Activated T-helper 1 cell treated with anti-CD3 and anti-CD28 coated beads, Interleukin-12 subunit alpha, Interleukin-12 subunit beta, Interleukin-2, Interleukin-4 antibody, amounts not matched to agents 30 ng/mL and 10 ng/mL and 1 ng/mL, durations not matched to agents 14 hours and 24 hours and 36 hours (primary cell): ENCODE measurements at regions of chr17 and their contacts with region 1.

Region 1: GRCh38 chr17:37373530-37374159 is 2.1 kb upstream of the C17orf78 start:
- DNase-seq: peak; percentile 62
- H3K4me3 Mint-ChIP-seq: no peak overlapping the region
- H3K27ac Mint-ChIP-seq: no peak overlapping the region
- H3K4me1 Mint-ChIP-seq: peaks cover 8% of the 10 kb centered on the region
- H3K27me3 Mint-ChIP-seq: no peaks in the 10 kb centered on the region

Region 2: DNA sequence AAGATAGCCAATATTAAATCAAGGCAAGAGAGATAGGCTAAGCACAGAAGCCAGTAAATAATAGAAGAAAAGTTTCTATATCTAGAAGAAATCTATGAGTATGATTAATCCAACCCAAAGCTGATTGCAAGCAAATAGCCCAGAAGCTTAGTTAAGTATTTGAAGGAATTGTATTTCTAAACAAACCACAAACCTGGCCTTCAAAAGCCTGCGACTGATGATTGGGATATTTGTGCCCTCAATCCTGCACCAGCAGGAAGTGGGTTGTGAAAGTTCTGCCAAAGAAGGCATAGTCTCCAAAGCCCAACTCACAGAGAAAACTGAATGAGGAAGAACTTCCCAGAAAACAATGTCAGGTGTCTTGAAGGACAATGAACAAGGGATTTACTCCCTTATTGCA is 112.4 kb before region 1 on chr17:
- intact Hi-C with region 1: loop called (anchors 10 kb)
- DNase-seq: no peak
- H3K4me3 Mint-ChIP-seq: no peak overlapping the region
- H3K27ac Mint-ChIP-seq: no peak overlapping the region
- H3K4me1 Mint-ChIP-seq: no peaks in the 10 kb centered on the region
- H3K27me3 Mint-ChIP-seq: no peaks in the 10 kb centered on the region

Region 3: GRCh38 chr17:37358830-37359681 is 14.6 kb before region 1 on chr17:
- intact Hi-C with region 1: loop called (anchors 1 kb)
- DNase-seq: peak; percentile 90
- H3K4me3 Mint-ChIP-seq: peak overlapping the region; percentile 98
- H3K27ac Mint-ChIP-seq: peak overlapping the region; percentile 92
- H3K4me1 Mint-ChIP-seq: peaks cover 32% of the 10 kb centered on the region
- H3K27me3 Mint-ChIP-seq: no peaks in the 10 kb centered on the region

Region 4: GRCh38 chr17:37392024-37392590 is 18.5 kb after region 1 on chr17:
- intact Hi-C with region 1: loop called (anchors 1 kb)
- DNase-seq: no peak
- H3K4me3 Mint-ChIP-seq: no peak overlapping the region
- H3K27ac Mint-ChIP-seq: no peak overlapping the region
- H3K4me1 Mint-ChIP-seq: peaks cover 22% of the 10 kb centered on the region
- H3K27me3 Mint-ChIP-seq: no peaks in the 10 kb centered on the region

Region 5: DNA sequence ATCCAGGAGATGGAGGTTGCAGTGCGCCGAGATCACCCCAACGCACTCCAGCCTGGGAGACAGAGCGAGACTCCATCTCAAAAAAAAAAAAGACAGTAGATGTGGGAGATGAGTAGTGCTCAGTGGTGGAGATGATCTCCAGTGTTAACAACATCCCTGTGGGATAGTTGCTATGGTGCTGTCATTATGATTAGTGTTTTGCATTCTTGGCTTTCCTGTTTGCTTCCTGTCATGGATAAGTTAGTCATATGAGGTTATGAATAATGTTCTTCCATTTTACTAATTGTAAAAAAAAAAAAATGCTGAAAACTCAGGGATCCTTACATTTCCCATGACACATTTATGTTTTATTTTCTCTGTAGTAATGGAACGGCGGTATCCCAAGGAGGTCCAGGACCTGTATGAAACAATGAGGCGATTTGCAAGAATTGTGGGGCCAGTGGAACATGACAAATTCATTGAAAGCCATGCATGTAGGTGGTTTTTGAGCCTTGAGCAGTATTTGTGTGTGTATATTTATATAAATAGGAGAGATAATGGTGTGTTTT is 91.5 kb after region 1 on chr17:
- intact Hi-C with region 1: no loop called
- DNase-seq: no peak
- H3K4me3 Mint-ChIP-seq: no peak overlapping the region
- H3K27ac Mint-ChIP-seq: no peak overlapping the region
- H3K4me1 Mint-ChIP-seq: peaks cover 21% of the 10 kb centered on the region
- H3K27me3 Mint-ChIP-seq: no peaks in the 10 kb centered on the region

Region 6: DNA sequence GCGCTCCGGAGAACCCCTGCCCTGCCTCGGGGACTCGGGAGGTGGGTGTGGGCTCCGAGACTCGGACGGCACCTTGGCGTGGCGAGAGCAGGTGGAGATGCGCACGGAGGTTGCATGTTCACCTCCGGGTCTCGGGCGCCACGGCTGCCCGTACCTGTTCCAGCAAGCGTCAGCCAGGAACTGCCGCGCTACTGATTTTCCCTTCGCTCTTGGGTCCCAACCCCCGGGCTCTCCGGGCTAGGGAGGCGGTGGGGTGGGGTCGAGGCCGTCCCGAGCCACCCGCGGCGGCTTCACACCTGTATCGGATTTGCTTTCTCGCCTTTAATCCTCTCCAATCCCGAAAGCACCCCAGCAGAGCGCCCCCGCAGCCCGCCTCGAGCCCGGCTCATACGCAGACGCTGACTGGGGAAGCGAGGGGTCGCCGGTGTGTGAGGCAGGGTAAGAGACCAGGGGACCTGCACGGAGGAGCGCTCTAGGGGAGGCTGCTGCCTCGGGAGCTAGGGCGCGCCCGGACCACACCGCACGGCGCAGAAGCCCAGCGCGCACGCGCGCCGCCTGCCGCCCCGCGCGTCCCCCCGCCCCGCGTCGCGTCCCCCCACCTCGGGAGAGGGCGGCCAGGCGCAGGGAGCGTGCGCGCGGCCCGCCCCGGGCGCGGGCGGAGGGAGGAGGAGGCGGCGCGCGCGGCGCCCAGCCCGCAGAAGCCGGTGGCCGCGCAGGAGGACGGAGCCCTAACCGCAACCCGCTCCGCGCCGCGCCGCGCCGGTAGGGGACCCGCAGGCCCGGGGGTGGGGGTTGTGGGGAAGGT is 115.8 kb after region 1 on chr17 and contains the start of gene DUSP14:
- intact Hi-C with region 1: loop called (anchors 1 kb)
- DNase-seq: peak; percentile 74
- H3K4me3 Mint-ChIP-seq: peak within 1 kb of the TSS; percentile 94
- H3K27ac Mint-ChIP-seq: peak within 1 kb of the TSS; percentile 97
- H3K4me1 Mint-ChIP-seq: peaks cover 50% of the 10 kb centered on the region
- H3K27me3 Mint-ChIP-seq: peaks cover 3% of the 10 kb centered on the region
- total RNA-seq, gene DUSP14: 21.4 and 22.3 TPM in 2 replicates

Region 7: GRCh38 chr17:37818689-37819088 is 445.0 kb after region 1 on chr17:
- intact Hi-C with region 1: loop called (anchors 10 kb)
- DNase-seq: no peak
- H3K4me3 Mint-ChIP-seq: no peak overlapping the region
- H3K27ac Mint-ChIP-seq: no peak overlapping the region
- H3K4me1 Mint-ChIP-seq: peaks cover 27% of the 10 kb centered on the region
- H3K27me3 Mint-ChIP-seq: peaks cover 20% of the 10 kb centered on the region